ENCODE measurements at regions of chr7 and their contacts with region 1.

Region 1: DNA sequence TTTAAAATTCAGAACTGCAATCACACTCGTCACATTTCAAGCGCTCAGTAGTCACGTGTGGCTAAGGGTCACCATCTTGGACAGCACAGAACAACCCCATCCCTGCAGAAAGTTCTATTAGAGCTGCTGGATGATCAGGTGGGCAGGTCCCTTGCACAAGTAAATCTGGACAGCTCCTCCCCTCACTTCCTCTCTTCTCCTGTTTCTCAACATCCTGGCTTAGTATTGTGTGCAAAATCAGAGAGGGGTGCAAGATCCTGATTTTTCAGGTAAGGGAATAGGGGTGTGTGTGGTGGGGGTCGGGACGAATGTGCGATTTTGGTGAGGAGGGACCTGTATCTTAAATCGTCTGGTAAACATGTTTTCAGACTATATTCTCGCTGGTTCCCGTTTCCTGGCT is at the start of gene GIMAP4:
- DNase-seq: peak in 5 of 9 experiments; percentile 33 to 71 (median 50)
- ATAC-seq: peak; percentile 28
- H3K4me3 ChIP-seq: peak within 1 kb of the TSS; percentile 83 to 88
- H3K4me3 Mint-ChIP-seq: peak within 1 kb of the TSS; percentile 97
- H3K27ac ChIP-seq: peak within 1 kb of the TSS; percentile 73 to 74
- H3K27ac Mint-ChIP-seq: peak within 1 kb of the TSS; percentile 98
- H3K4me1 ChIP-seq: peaks cover 73% of the 10 kb centered on the region
- H3K4me1 Mint-ChIP-seq: peaks cover 78% of the 10 kb centered on the region
- H3K27me3 ChIP-seq: no peaks in the 10 kb centered on the region
- H3K27me3 Mint-ChIP-seq: no peaks in the 10 kb centered on the region
- CTCF ChIP-seq: no peak
- total RNA-seq, gene GIMAP4: 11.8 to 13.8 TPM

Region 2: DNA sequence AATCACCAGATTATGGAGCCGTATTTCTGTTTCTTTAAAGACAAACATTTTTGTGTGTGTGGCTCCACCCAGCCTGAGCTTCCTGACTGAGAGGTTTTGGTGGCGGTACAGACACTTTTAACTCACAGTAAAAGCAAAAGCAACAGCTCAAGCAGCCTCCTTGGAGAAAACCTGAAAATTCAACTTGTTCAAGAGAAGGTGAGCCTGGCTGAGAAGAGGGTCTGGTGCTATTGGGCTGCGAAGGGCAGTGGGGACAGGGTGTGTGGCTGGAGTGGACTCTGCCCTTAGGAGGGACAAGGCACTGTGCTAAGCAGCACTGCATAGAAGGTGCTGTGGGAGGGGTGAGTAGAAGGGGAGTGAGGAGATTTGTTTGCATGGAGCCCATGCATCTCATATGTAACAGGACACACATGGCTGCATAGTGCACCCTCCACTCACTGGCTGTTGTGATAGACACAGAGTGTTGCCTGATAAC is 52.4 kb before region 1 on chr7 and contains the start of gene GIMAP7:
- CTCF ChIA-PET with region 1: interaction called, 28 read pairs
- POLR2A ChIA-PET with region 1: interaction called, 300 read pairs
- intact Hi-C with region 1: loop called (anchors 2 to 5 kb)
- DNase-seq: peak; percentile 36 to 87 (median 73)
- ATAC-seq: peak; percentile 82
- H3K4me3 ChIP-seq: peak within 1 kb of the TSS; percentile 63 to 76
- H3K4me3 Mint-ChIP-seq: peak within 1 kb of the TSS; percentile 100
- H3K27ac ChIP-seq: peak within 1 kb of the TSS; percentile 69 to 75
- H3K27ac Mint-ChIP-seq: peak within 1 kb of the TSS; percentile 99
- H3K4me1 ChIP-seq: peaks cover 45% of the 10 kb centered on the region
- H3K4me1 Mint-ChIP-seq: peaks cover 48% of the 10 kb centered on the region
- H3K27me3 ChIP-seq: no peaks in the 10 kb centered on the region
- H3K27me3 Mint-ChIP-seq: no peaks in the 10 kb centered on the region
- CTCF ChIP-seq: no peak
- total RNA-seq, gene GIMAP7: 21.2 to 29.7 TPM

Region 3: DNA sequence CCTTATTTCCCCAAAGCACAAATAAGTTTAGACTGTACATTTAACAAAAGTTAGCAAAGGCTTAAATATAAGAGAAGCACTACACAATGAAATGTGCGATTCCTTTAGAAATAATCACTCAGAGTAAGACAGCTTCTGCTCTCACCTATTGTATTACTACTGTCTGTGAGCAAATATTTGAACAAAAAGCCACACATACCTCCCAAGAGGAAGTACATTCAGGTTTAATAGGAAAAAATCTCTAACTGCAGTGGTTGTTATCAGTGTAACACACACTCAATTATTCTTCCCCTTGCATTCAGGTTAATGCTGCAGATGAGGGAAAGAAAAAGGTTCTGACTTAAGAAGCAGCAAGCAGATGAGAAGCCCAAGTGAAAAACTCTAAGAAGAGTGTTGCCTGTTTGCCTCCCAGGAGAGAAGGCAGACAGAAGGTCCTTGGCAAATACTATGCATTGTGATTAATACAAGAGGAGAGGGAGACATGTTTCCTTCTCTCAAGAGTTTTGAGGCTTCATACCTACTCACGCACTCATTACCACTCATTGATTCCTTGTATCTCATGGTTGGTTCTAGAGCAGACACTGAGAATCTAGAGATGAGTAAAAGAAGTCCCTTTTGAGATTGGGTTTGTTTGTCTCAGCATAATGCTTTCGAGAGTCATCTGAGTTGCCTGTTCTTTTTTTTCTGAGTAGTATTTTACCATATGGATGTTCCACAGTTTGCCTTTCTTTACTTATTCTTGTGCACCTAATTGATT is 13.6 kb after region 1 on chr7:
- CTCF ChIA-PET with region 1: no interaction called
- POLR2A ChIA-PET with region 1: interaction called, 24 read pairs
- intact Hi-C with region 1: no loop called
- DNase-seq: peak in 1 of 9 experiments; percentile 1
- ATAC-seq: no peak
- H3K4me3 ChIP-seq: no peak overlapping the region
- H3K4me3 Mint-ChIP-seq: no peak overlapping the region
- H3K27ac ChIP-seq: no peak overlapping the region
- H3K27ac Mint-ChIP-seq: peak overlapping the region; percentile 71
- H3K4me1 ChIP-seq: peaks cover 3% of the 10 kb centered on the region
- H3K4me1 Mint-ChIP-seq: peaks cover 51% of the 10 kb centered on the region
- H3K27me3 ChIP-seq: no peaks in the 10 kb centered on the region
- H3K27me3 Mint-ChIP-seq: no peaks in the 10 kb centered on the region
- CTCF ChIP-seq: no peak

Region 4: DNA sequence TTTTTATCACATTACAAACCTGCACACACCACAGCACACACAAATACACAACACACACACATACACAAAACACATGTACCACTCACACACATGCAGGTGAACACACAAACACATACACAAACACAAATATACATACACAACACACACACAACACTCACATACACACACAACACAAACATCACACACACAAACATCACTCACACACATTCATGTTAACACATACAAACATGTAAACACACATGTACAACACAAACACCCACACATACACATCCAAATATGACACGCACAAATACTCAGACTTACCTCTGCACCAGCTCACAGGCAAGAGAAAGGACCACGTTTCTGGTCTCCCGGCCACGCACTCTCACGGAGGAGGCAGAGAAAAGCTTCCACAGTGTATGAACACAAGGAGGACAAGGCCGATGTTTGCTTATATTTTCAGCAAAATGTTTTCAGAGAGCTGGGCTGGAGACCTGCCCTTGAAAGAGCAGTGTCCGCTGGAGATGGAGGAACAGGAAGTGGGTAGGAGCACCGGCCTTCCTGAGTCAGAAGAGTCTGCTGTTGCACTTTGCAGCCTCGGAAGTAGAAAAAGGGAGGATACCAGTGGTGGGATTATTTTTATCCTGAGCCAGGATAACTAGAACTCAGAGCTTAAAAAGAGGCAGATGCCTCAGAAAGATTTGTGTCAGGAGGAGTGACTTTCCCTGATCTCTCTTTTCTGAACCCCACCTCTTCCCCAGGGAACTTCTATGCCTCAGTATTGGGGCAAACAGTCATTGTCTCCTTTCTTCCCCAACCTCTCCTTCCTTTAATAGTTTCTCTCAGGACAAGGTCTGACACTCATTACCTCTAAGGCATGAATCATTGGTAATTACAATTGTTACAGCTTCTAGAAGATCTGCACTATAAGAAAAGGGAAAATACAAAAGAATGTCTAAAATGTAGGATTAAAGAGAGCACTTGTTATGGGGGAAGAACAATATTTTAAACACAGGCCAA is 65.0 kb after region 1 on chr7 and contains the start of gene GIMAP6:
- CTCF ChIA-PET with region 1: interaction called, 8 read pairs
- POLR2A ChIA-PET with region 1: interaction called, 142 read pairs
- intact Hi-C with region 1: loop called (anchors 2 to 5 kb)
- DNase-seq: peak in 8 of 9 experiments; percentile 33 to 79 (median 50)
- ATAC-seq: peak; percentile 61
- H3K4me3 ChIP-seq: peak within 1 kb of the TSS; percentile 82 to 85
- H3K4me3 Mint-ChIP-seq: peak within 1 kb of the TSS; percentile 97
- H3K27ac ChIP-seq: peak within 1 kb of the TSS; percentile 58 to 83
- H3K27ac Mint-ChIP-seq: peak within 1 kb of the TSS; percentile 96
- H3K4me1 ChIP-seq: peaks cover 54% of the 10 kb centered on the region
- H3K4me1 Mint-ChIP-seq: peaks cover 86% of the 10 kb centered on the region
- H3K27me3 ChIP-seq: no peaks in the 10 kb centered on the region
- H3K27me3 Mint-ChIP-seq: no peaks in the 10 kb centered on the region
- CTCF ChIP-seq: no peak
- total RNA-seq, gene GIMAP6: 10.5 to 10.8 TPM

Region 5: DNA sequence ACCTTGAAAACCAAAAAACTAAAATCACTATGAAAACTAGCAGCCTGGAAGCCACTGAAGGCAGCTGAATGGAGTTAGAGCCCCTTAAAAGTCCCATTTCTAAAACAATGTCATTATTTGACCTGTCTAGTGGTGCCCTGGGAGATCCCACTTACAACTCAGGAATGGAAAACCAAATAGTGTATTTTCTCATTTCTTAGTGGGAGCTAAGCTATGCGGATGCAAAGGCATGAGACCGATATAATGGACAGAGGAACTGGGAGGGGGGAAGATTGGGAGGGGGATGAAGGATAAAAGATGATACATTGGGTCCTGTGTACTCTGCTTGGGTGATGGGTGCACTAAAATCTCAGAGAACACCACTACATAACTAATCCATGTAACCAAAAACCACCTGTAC is 108.5 kb after region 1 on chr7:
- CTCF ChIA-PET with region 1: interaction called, 4 read pairs
- POLR2A ChIA-PET with region 1: interaction called, 11 read pairs
- intact Hi-C with region 1: no loop called
- DNase-seq: no peak
- ATAC-seq: no peak
- H3K4me3 ChIP-seq: peak overlapping the region in 1 of 2 experiments; percentile 24
- H3K4me3 Mint-ChIP-seq: peak overlapping the region; percentile 36
- H3K27ac ChIP-seq: peak overlapping the region; percentile 12 to 70
- H3K27ac Mint-ChIP-seq: peak overlapping the region; percentile 83
- H3K4me1 ChIP-seq: peaks cover 69% of the 10 kb centered on the region
- H3K4me1 Mint-ChIP-seq: peaks cover 81% of the 10 kb centered on the region
- H3K27me3 ChIP-seq: no peaks in the 10 kb centered on the region
- H3K27me3 Mint-ChIP-seq: no peaks in the 10 kb centered on the region
- CTCF ChIP-seq: no peak

Region 6: DNA sequence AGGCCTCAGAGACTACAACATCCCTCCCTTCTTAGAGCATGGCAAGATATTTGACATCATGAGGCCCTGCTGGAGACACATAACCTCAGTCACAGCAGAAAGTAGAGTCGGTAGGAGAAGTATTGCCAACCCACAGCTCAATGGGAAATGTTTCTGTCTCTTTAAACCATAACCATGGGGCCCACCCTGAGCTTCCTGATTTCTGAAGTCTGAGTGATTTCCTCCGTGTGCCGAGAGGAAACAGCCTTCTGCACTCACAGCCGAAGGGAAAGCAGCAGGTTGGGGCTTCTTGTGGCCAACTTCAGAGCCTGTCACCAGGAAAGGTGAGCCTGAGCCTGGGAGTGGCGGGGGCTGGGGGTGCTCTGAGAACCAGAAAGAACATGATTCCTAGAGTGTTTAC is 149.2 kb after region 1 on chr7 and contains the start of gene GIMAP1:
- CTCF ChIA-PET with region 1: interaction called, 28 read pairs
- POLR2A ChIA-PET with region 1: interaction called, 46 read pairs
- intact Hi-C with region 1: no loop called
- DNase-seq: peak in 8 of 9 experiments; percentile 59 to 85 (median 73)
- ATAC-seq: peak; percentile 84
- H3K4me3 ChIP-seq: peak within 1 kb of the TSS; percentile 90 to 91
- H3K4me3 Mint-ChIP-seq: peak within 1 kb of the TSS; percentile 95
- H3K27ac ChIP-seq: peak within 1 kb of the TSS; percentile 73 to 87
- H3K27ac Mint-ChIP-seq: peak within 1 kb of the TSS; percentile 96
- H3K4me1 ChIP-seq: peaks cover 50% of the 10 kb centered on the region
- H3K4me1 Mint-ChIP-seq: peaks cover 67% of the 10 kb centered on the region
- H3K27me3 ChIP-seq: no peaks in the 10 kb centered on the region
- H3K27me3 Mint-ChIP-seq: no peaks in the 10 kb centered on the region
- CTCF ChIP-seq: no peak
- total RNA-seq, gene GIMAP1: 6.1 to 6.2 TPM

Measured in CD8-positive, alpha-beta T cell (primary cell).